ENCODE measurements at regions of chr5 and their contacts with region 1.

Region 1: DNA sequence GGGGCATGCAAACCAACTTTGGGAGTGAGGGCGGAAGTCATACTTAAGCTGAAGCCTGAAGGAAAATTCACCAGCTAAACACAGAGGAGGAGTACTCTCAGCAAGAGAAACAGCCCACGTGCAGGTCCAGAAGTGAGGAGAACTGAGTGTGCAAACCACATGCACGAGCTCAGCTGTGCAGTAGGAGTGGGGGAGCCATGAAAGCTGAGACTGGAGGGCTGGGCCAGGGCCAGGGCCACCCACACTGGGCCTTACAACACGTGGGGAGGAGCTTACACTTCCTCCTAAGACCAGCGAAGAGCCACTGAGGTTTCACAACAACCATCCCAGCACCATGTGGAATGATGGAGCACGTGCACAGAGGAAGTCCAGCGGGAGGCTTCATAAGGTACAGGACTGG is 9.3 kb upstream of the WWC1 start:
- DNase-seq: no peak
- CTCF ChIP-seq: no peak

Region 2: GRCh38 chr5:168093200-168093910 is 188.8 kb before region 1 on chr5:
- CTCF ChIA-PET with region 1: no interaction called
- POLR2A ChIA-PET with region 1: no interaction called
- DNase-seq: no peak
- CTCF ChIP-seq: no peak

Region 3: DNA sequence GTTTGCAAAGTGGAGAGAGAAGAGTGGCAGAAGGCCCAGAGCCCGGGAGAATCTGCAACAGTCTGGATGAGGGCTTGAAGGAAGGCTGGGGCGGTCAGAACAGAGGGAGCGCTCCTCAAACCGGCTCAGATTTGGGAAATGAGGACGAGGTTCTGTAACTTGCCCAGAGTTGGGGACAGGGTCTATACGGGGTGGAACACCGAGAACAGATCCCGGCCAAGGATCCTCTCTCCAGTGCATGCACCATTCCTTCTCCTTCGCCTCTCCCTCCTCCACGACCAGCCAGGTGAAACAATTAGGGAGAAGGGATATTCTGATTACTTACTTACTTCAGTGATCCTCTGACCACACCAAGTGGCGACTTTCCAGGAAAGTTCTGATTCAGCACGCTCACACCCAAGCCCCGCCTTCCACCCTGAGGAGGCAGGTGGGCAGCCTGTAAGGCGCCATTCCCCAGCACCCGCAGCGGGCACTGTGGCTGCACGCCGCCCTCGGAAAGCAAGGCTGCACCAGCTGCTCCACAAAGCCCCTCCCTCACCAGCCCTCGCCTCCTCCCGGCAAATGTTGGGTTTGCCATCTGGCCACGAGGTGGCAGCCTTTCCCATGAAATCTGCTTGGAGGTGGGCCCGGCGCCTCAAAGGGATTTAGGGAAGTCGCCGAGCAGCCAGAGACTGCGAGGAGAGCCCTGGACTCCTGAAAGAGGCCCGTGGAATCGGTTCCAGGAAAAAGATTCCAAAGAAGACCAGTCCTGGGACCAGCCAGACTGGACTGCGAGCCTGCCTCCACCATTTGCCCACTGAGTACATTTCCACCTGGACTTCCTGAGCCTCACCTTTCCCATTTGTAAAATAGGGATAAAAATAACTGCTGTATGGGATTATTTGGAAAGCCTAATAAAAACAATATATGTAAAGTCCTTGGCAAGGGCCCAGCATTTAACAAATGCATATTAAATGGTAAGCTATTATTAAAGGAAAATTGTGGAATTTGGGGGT is 12.9 kb before region 1 on chr5:
- CTCF ChIA-PET with region 1: interaction called, 18 read pairs
- POLR2A ChIA-PET with region 1: no interaction called
- DNase-seq: peak; percentile 85
- CTCF ChIP-seq: peak; percentile 96

Measured in GM10248 (cell line).